ENCODE measurements at regions of chr7 and their contacts with region 1.

Region 1: GRCh38 chr7:70372768-70373515 is 759.0 kb upstream of the GALNT17 start:
- DNase-seq: no peak
- H3K4me3 ChIP-seq: no peak overlapping the region
- H3K27ac ChIP-seq: no peak overlapping the region
- H3K4me1 ChIP-seq: no peaks in the 10 kb centered on the region
- H3K27me3 ChIP-seq: no peaks in the 10 kb centered on the region

Region 2: DNA sequence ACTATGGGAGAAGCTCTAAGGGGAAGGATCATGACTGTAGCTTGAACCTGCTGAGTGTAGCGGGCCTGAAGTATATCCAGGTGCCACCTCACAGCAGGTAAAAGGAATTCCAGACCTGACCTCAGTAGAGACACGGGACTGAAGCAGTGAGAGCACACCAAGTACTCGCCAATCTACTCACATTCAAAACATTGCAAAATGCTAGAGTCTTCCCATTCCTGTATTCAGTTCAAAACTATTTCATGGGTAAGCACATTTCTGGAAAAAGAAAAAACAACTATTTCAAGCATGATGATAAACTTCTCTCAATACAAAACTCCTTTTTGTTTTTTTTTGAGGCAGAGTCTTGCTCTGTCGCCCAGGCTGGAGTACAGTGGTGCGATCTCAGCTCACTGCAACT is 896.5 kb before region 1 on chr7:
- CTCF ChIA-PET with region 1: no interaction called
- POLR2A ChIA-PET with region 1: no interaction called
- DNase-seq: no peak
- H3K4me3 ChIP-seq: no peak overlapping the region
- H3K27ac ChIP-seq: no peak overlapping the region
- H3K4me1 ChIP-seq: no peaks in the 10 kb centered on the region
- H3K27me3 ChIP-seq: no peaks in the 10 kb centered on the region

Region 3: DNA sequence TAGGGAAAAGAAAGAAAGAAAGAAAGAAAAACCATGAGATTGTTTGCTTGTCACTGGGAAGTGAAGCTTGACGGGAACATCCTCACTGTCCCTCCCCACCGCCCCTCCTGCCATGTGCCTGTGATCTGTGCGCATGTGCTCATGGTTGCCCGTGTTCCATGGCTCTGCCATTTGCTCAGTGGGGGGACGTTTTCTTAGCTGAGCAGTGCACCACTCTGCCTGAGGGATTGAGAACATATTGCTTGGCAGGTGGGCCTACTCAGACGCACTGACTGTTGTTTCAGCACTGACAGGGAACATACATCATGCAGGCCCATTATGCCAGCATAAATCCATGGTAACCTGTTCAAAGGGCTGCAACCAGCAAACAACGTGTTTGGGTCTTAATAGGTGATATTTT is 11.1 kb after region 1 on chr7:
- CTCF ChIA-PET with region 1: interaction called, 3 read pairs
- POLR2A ChIA-PET with region 1: interaction called, 10 read pairs
- DNase-seq: no peak
- H3K4me3 ChIP-seq: no peak overlapping the region
- H3K27ac ChIP-seq: no peak overlapping the region
- H3K4me1 ChIP-seq: no peaks in the 10 kb centered on the region
- H3K27me3 ChIP-seq: no peaks in the 10 kb centered on the region

Measured in common myeloid progenitor, CD34-positive (primary cell).